HEK293 (cell line): ENCODE measurements at regions of chr5 and their contacts with region 1.

Region 1: DNA sequence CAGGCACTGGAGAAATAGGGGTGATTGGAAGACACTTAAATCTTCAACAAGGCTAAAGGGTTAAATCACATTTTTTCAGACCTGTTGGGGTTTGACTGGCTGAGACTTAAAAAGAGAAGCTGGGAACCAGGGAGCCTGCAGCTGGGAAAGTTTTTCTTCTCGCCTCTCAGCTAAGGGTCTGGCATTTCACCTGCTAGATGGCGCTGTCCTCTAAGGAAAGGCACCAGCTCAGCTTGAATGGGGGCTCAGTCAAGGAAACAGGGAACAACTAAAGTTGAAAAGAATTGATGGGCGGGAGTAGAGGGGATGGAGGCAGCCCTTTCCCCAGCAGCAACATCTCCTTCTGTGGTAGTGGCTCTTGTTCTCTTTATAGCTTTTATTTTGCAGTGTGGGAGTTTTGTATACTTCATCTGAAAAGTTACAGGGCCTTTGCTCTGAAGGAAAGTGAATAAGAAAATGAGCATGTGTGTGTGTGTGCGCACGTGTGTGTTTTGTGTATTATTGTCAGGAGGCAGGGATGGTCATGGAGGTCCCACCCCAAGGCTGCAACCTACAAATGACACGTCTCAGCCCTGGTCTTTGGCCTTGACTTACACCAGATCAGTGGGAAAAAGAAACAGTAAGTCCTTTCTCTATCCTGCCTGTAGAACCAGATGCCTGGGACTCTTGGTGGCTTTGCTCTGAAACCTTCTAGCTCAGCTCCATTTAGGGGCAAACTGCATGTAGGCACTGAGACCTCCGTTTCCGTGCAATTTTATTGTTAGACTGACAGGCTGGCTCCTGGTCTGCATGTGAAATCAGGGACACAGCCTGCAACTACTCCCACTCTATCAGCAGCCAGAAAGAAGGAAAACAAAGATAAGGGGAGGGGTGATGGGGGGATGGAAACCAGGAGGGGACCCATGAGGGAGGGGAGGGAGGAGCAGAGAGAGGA is 316.2 kb upstream of the CLINT1 start:
- H3K4me3 ChIP-seq: no peak overlapping the region
- H3K27ac ChIP-seq: peak overlapping the region; percentile 83; the same call in 1 of the 2 replicates
- H3K4me1 ChIP-seq: peaks cover 15% of the 10 kb centered on the region
- CTCF ChIP-seq: peak; percentile 80; the same call in 1 of the 2 replicates

Region 2: DNA sequence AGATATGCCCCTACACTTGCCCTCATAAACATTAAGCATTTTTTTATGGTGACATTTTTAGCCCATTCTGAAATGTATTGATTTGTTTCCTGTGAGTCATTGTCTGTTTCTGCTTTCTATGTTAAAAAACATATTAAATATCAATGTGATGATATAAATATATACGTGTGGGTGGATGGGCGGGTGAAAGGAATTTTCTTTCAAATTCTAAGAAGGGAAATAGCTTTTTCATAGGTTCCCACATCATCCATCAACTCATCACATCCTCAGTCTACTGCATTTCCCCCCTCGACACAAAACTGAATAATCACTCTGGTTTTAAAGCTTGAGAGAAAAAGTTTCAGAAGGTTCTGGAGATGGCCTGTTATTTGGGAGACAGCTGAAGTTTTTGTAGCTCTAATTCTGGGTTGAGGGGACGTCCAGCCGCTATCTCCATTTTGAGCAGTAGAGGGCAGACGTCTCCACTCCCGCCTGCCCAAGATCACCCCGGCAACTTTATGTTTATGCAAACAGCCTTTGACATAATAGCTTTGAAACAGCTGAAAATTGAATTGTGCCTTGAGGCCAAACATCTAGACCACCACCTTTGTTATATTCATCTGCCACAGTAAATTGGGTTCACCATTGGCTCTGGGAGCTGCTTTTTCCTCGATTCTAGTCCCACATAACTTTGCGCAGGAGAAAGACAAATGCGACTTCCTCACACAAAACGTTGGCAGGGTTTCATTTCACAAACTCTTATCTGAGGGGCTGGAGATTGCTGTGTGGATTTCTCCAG is 100.0 kb before region 1 on chr5:
- CTCF ChIA-PET with region 1: interaction called, 12 read pairs
- POLR2A ChIA-PET with region 1: no interaction called
- H3K4me3 ChIP-seq: no peak overlapping the region
- H3K27ac ChIP-seq: no peak overlapping the region
- H3K4me1 ChIP-seq: no peaks in the 10 kb centered on the region
- CTCF ChIP-seq: peak; percentile 57

Region 3: GRCh38 chr5:158473016-158473635 is 297.9 kb after region 1 on chr5:
- CTCF ChIA-PET with region 1: no interaction called
- POLR2A ChIA-PET with region 1: no interaction called
- H3K4me3 ChIP-seq: no peak overlapping the region
- H3K27ac ChIP-seq: no peak overlapping the region
- H3K4me1 ChIP-seq: peaks cover 2% of the 10 kb centered on the region; the same call in 1 of the 2 replicates
- CTCF ChIP-seq: no peak

Region 4: DNA sequence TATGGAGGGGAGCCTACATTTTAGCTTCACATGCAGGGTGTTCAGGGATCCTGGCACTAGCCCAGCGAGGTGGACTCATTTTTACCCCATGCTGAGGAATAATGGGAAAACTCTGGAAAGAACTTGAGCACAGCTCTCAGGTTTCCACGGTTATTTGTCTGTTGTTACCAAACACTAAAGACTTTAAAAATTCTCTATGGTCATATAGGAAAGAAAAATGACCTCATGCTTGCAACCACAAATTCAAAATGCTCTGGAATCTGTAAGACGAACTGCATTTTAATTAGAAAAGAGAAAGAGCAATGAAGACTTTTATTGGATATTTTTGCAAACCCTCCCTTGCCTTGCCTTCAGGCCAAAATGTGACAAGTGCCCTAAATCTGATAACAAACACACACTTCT is 317.7 kb after region 1 on chr5:
- CTCF ChIA-PET with region 1: no interaction called
- POLR2A ChIA-PET with region 1: no interaction called
- H3K4me3 ChIP-seq: no peak overlapping the region
- H3K27ac ChIP-seq: no peak overlapping the region
- H3K4me1 ChIP-seq: peaks cover 5% of the 10 kb centered on the region
- CTCF ChIP-seq: no peak

Region 5: GRCh38 chr5:159100025-159100781 is 925.0 kb after region 1 on chr5:
- CTCF ChIA-PET with region 1: interaction called, 60 read pairs
- POLR2A ChIA-PET with region 1: no interaction called
- H3K4me3 ChIP-seq: peak overlapping the region; percentile 59
- H3K27ac ChIP-seq: peak overlapping the region; percentile 59
- H3K4me1 ChIP-seq: 0 out of 2 replicates have a peak, but pooled peaks cover 5% of the 10 kb centered on the region
- CTCF ChIP-seq: peak; percentile 64; the same call in 1 of the 2 replicates

Region 6: DNA sequence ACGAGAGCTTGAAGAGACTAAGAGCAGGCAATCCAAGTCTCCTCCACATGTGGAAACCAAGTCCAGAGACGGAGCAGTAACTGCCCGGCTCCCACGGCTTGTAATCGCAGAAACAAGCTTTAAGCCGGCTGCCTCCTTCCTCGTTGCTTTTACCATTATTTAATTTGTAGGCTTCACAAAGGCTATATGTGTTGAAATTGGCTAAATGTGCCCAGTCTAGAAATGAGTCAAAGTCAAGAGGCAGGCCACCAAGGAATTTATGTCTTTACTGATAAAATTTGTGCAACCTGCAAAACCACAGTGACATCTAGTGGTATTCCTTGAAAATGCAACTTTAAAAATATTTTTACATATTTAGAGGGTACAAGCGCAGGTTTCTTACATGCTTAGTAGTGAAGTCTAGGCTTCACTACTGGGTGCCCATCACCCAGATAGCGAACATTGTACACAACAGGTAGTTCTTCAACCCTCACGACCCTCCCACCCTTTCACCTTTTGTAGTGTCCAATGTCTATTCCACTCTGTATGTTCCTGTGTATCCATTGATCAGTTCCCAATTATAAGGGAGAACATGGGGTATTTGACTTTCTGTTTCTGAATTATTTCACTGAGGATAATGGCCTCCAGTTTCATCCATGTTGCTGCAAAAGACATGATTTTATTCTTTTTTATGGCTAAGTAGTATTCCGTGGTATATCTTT is 958.0 kb after region 1 on chr5:
- CTCF ChIA-PET with region 1: interaction called, 23 read pairs
- POLR2A ChIA-PET with region 1: no interaction called
- H3K4me3 ChIP-seq: no peak overlapping the region
- H3K27ac ChIP-seq: no peak overlapping the region; the same call in 1 of the 2 replicates
- H3K4me1 ChIP-seq: peaks cover 11% of the 10 kb centered on the region
- CTCF ChIP-seq: peak; percentile 58; the same call in 1 of the 2 replicates